GM12878 (cell line): ENCODE measurements at regions of chrX and their contacts with region 1.

Region 1: DNA sequence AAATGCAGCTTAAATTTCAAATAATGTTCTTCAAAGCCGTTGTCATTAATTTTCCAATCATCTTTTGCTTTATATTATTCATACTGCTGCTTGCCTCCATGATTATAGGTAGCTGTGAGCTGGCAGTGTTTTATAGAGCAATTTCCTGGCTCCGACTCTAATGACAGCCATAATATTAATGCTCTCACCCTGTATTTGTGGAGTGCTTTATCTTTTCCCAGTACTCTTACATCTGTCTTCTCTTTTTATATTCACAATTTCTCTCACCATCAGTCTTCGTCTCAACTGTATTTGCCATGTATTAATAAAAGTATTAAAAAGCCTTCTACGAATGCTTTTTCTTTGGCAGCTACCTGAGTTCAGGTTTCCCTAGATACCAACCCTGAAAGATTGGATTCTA is 21.0 kb downstream of the ATXN3L start:
- DNase-seq: no peak
- ATAC-seq: no peak
- H3K4me3 ChIP-seq: no peak overlapping the region
- H3K27ac ChIP-seq: no peak overlapping the region
- H3K4me1 ChIP-seq: no peaks in the 10 kb centered on the region
- H3K27me3 ChIP-seq: no peaks in the 10 kb centered on the region
- CTCF ChIP-seq: no peak
- EP300 ChIP-seq: no peak
- POLR2A ChIP-seq: no peak
- RAD21 ChIP-seq: no peak

Region 2: GRCh38 chrX:13271511-13271910 is 27.3 kb before region 1 on chrX:
- CTCF ChIA-PET with region 1: no interaction called
- POLR2A ChIA-PET with region 1: no interaction called
- RAD21 ChIA-PET with region 1: no interaction called
- SMC1A ChIA-PET with region 1: interaction called, 16 read pairs
- in situ Hi-C with region 1: no loop called
- intact Hi-C with region 1: no loop called
- DNase-seq: no peak
- ATAC-seq: no peak
- H3K4me3 ChIP-seq: no peak overlapping the region
- H3K27ac ChIP-seq: no peak overlapping the region
- H3K4me1 ChIP-seq: no peaks in the 10 kb centered on the region
- H3K27me3 ChIP-seq: no peaks in the 10 kb centered on the region
- CTCF ChIP-seq: no peak
- EP300 ChIP-seq: no peak
- POLR2A ChIP-seq: no peak
- RAD21 ChIP-seq: no peak

Region 3: GRCh38 chrX:13411496-13412207 is 112.8 kb after region 1 on chrX:
- CTCF ChIA-PET with region 1: no interaction called
- POLR2A ChIA-PET with region 1: no interaction called
- RAD21 ChIA-PET with region 1: no interaction called
- SMC1A ChIA-PET with region 1: no interaction called
- in situ Hi-C with region 1: no loop called
- intact Hi-C with region 1: no loop called
- DNase-seq: no peak
- ATAC-seq: no peak
- H3K4me3 ChIP-seq: no peak overlapping the region
- H3K27ac ChIP-seq: no peak overlapping the region
- H3K4me1 ChIP-seq: no peaks in the 10 kb centered on the region
- H3K27me3 ChIP-seq: no peaks in the 10 kb centered on the region
- CTCF ChIP-seq: no peak
- EP300 ChIP-seq: no peak
- POLR2A ChIP-seq: no peak
- RAD21 ChIP-seq: no peak